OCI-LY7 (cell line): ENCODE measurements at regions of chr2 and their contacts with region 1.

Region 1: DNA sequence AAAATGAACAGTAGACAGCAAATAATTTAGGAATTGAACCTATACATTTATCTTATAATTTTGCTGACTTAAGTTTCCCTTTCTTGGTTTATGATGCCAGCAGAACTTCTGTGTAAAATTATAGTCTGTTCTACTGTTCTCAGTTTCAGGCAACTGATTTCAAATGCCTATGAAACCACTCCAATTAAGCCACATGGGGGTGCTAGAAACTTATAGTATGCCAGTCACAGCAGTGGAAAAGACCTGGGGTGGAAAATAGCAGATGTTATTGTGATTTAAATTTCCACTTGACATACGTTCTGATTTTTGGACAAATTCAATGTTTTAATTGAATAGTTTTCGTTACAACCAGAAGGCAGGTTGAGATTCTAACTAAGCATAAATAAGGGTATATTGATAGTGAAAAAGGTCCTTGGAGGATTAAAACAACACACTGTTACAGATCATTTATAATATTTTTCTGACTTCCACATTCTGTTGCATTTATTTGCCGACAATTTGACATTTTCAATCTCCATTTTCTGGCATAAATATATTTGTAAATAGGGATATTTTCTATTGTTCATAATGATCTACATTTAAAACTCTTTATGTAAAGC is 61.4 kb downstream of the CPS1 start:
- DNase-seq: peak; percentile 33
- H3K4me3 ChIP-seq: no peak overlapping the region
- H3K27ac ChIP-seq: no peak overlapping the region
- H3K4me1 ChIP-seq: no peaks in the 10 kb centered on the region
- CTCF ChIP-seq: peak; percentile 77

Region 2: GRCh38 chr2:210363271-210363670 is 254.6 kb before region 1 on chr2:
- CTCF ChIA-PET with region 1: no interaction called
- POLR2A ChIA-PET with region 1: no interaction called
- intact Hi-C with region 1: no loop called
- DNase-seq: peak; percentile 5
- H3K4me3 ChIP-seq: no peak overlapping the region
- H3K27ac ChIP-seq: no peak overlapping the region
- H3K4me1 ChIP-seq: no peaks in the 10 kb centered on the region
- CTCF ChIP-seq: peak; percentile 49

Region 3: DNA sequence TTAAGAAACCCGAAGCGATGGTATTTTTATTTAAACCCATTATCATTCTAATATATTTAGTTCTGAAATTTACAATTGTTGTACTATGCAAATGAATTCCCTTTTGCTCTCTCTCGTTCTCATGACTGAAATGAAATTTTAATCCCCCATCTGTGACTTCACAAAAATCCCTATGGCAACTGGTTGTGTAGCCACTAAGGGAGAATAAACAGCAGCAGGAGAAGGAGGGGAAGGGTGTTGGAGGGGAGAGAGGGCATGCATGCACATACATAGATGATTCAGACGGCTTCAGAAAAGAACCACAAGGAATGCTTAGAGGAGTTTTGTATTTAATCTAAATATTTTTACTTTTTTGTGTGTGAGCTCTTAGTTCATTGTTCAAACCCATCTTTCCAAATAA is 24.7 kb before region 1 on chr2:
- CTCF ChIA-PET with region 1: no interaction called
- POLR2A ChIA-PET with region 1: no interaction called
- intact Hi-C with region 1: no loop called
- DNase-seq: no peak
- H3K4me3 ChIP-seq: no peak overlapping the region
- H3K27ac ChIP-seq: no peak overlapping the region
- H3K4me1 ChIP-seq: no peaks in the 10 kb centered on the region
- CTCF ChIP-seq: no peak

Region 4: GRCh38 chr2:210713122-210713521 is 95.3 kb after region 1 on chr2:
- CTCF ChIA-PET with region 1: no interaction called
- POLR2A ChIA-PET with region 1: no interaction called
- intact Hi-C with region 1: no loop called
- DNase-seq: no peak
- H3K4me3 ChIP-seq: no peak overlapping the region
- H3K27ac ChIP-seq: no peak overlapping the region
- H3K4me1 ChIP-seq: no peaks in the 10 kb centered on the region
- CTCF ChIP-seq: no peak

Region 5: DNA sequence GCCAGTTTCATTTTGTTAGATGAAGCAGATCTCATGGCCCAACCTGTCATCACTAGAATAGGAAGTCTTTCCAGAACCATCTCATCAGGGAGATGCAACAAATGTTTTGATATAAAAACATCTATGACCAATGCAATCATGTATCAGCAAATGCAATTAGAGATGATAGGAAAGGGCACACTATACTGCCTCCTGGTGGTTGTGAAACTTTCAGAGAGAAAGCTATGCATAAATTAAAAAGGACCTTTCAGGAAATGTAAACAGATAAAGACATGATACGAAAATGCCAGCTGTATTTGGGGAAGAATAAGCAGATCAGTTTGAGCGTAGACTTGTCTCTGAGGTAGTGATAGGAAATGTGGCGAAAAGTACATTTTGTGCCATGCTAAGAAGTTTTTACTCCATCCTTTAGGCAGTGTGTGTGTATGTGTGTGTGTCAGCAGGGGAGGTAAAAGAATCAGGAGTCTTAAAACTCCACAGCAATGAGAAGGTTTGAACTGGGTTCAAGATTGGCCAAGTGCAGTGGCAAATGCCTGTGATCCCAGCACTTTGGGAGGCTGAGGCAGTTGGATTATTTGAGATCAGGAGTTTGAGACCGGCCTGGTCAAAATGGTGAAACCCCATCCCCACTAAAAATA is 417.8 kb after region 1 on chr2:
- CTCF ChIA-PET with region 1: no interaction called
- POLR2A ChIA-PET with region 1: no interaction called
- intact Hi-C with region 1: loop called (anchors 5 kb)
- DNase-seq: peak; percentile 10
- H3K4me3 ChIP-seq: no peak overlapping the region
- H3K27ac ChIP-seq: no peak overlapping the region
- H3K4me1 ChIP-seq: no peaks in the 10 kb centered on the region
- CTCF ChIP-seq: peak; percentile 81